Posterior vena cava (tissue), 2 donors: ENCODE measurements at regions of chr7 and their contacts with region 1.

Region 1: DNA sequence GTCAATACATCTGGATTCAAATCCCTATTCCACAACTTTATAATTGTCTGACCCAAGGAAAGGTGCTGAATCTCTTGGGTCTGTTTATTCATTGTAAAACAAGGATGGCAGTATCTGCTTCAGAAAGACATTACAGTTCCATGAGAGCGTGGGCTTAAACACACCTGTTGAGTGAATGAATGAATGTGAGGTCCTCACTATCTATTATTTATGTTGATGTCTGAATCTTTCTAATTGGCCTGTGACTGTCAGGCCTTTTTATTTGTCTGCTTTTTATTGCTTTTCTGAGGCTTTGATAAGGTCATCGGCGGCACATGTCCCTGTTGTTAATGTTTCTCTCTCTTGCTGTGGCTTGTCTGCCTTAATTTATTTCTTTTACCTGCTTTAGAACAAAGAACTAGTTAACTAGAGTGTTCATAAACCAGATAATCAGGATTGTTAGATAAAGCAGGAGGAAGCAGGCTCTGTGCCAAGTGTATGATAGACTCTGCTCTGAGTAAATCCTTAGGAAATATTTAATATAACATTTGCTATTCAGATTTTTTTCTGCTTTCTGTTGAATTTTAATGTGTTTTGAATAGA is 42.3 kb upstream of the CYCS start:
- DNase-seq: no peak

Region 2: DNA sequence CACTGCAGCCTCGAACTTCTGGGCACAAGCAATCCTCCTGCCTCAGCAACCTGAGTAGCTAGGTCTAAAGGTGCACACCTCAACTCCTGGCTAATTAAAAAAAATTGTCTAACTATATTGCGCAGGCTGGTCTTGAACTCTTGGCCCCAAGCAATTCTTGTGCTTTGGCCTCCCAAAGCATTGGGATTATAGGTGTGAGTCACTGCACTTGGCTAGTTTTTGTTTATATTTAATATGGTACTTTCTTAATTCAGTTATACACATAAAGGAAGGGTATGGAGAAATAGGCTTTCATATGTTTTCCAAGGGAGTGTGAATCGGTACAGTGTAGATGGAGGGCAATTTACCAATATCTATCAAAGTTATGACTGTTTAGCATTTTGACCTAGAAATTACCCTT is 40.5 kb after region 1 on chr7:
- intact Hi-C with region 1: loop called in 1 of 2 experiments (anchors 2 kb)
- DNase-seq: no peak